Activated CD4-positive, alpha-beta memory T cell treated with anti-CD3 and anti-CD28 coated beads for 36 hours (primary cell): ENCODE measurements at regions of chr6 and their contacts with region 1.

Region 1: DNA sequence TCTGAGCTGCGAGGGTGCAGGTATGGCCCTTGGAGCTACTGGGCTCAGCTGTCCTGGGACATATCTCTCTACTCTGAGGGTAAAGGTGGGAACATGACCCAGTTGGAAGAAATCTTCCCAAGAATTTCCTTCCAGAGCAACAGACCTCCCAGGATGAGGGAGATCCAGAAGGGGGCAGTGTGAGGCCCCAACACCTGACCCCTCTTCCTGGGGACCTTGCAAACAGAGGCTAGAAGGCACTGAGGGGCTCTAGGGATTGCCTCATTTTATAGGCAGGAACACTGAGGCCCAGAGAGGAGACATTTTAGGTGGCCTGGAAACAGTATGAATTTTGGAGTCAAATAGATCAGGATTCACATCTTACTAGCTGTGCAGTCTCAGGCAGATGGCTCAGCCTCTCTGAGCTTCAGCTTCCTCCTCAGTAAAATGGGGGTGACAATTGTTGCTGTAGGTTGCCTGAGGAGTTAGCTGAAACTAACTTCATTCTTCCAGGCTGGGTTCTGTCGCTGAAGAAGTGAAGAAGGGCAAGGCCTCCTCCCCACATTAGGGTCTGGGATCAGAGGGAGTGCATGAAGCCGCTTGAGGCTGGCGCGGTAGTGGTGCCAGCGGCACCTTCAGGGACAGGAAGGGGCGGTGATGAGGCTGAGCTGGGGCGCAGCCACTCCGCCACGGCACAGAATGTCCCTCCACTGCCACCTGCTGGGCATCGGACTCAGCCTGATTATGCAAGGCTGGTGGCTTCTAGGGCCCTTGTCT is 11.4 kb downstream of the KCNK17 start:
- DNase-seq: peak; percentile 92
- H3K4me3 Mint-ChIP-seq: peak overlapping the region; percentile 59
- H3K27ac Mint-ChIP-seq: no peak overlapping the region
- H3K4me1 Mint-ChIP-seq: peaks cover 3% of the 10 kb centered on the region
- H3K27me3 Mint-ChIP-seq: no peaks in the 10 kb centered on the region

Region 2: DNA sequence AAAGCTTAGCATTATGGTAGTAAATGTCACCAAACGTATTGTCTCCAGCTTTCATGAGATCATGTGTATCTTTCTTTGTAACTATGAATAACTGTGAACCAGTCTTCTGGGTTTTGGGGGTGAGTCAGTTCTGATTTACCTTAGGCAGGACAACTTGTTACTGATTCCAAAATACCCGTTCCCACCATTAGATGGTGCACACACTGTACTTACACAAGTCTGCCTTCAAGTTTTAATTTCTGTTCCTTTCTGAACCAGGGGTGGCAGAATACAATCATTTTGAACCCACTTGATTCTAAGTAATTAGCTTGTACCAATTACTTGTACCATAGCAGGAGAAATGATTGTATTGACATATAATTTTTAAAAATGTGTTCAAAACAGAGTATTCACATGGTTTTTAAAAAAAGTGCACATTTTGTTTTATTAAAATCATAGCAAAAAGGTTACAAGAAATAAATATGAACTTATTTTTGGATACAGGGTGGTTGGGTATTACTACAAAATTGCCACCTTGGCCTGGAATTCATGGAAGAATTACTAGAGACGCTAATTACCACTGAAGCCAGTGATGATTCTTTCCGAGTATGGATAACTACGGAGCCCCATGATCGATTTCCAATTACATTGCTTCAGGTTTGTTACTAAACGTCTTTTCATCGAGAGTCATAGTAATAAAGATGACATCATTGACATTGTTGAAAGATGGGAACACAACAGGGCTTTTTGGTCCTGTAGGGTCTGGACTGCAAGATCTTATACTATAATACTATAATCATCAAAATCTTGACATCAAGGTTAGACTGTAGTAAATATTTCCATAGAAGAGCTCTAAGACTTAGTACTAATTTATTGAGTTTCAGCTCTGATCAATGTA is 329.4 kb before region 1 on chr6:
- CTCF ChIA-PET with region 1: interaction called, 31 read pairs
- POLR2A ChIA-PET with region 1: no interaction called
- intact Hi-C with region 1: loop called (anchors 1 kb)
- DNase-seq: peak; percentile 13
- H3K4me3 Mint-ChIP-seq: no peak overlapping the region
- H3K27ac Mint-ChIP-seq: no peak overlapping the region
- H3K4me1 Mint-ChIP-seq: peaks cover 2% of the 10 kb centered on the region
- H3K27me3 Mint-ChIP-seq: peaks cover 13% of the 10 kb centered on the region

Region 3: GRCh38 chr6:38997128-38997761 is 305.6 kb before region 1 on chr6:
- CTCF ChIA-PET with region 1: interaction called, 39 read pairs
- POLR2A ChIA-PET with region 1: no interaction called
- intact Hi-C with region 1: loop called (anchors 5 kb)
- DNase-seq: peak; percentile 47
- H3K4me3 Mint-ChIP-seq: no peak overlapping the region
- H3K27ac Mint-ChIP-seq: no peak overlapping the region
- H3K4me1 Mint-ChIP-seq: no peaks in the 10 kb centered on the region
- H3K27me3 Mint-ChIP-seq: peaks cover 29% of the 10 kb centered on the region

Region 4: GRCh38 chr6:39153766-39154397 is 149.0 kb before region 1 on chr6:
- CTCF ChIA-PET with region 1: interaction called, 14 read pairs
- POLR2A ChIA-PET with region 1: no interaction called
- intact Hi-C with region 1: no loop called
- DNase-seq: peak; percentile 60
- H3K4me3 Mint-ChIP-seq: no peak overlapping the region
- H3K27ac Mint-ChIP-seq: peak overlapping the region; percentile 75
- H3K4me1 Mint-ChIP-seq: peaks cover 25% of the 10 kb centered on the region
- H3K27me3 Mint-ChIP-seq: peaks cover 23% of the 10 kb centered on the region

Region 5: GRCh38 chr6:39166189-39166911 is 136.5 kb before region 1 on chr6:
- CTCF ChIA-PET with region 1: interaction called, 469 read pairs
- POLR2A ChIA-PET with region 1: no interaction called
- intact Hi-C with region 1: loop called (anchors 1 kb)
- DNase-seq: peak; percentile 90
- H3K4me3 Mint-ChIP-seq: no peak overlapping the region
- H3K27ac Mint-ChIP-seq: no peak overlapping the region
- H3K4me1 Mint-ChIP-seq: peaks cover 4% of the 10 kb centered on the region
- H3K27me3 Mint-ChIP-seq: no peaks in the 10 kb centered on the region

Region 6: GRCh38 chr6:39182604-39183003 is 120.2 kb before region 1 on chr6:
- CTCF ChIA-PET with region 1: interaction called, 13 read pairs
- POLR2A ChIA-PET with region 1: no interaction called
- intact Hi-C with region 1: no loop called
- DNase-seq: no peak
- H3K4me3 Mint-ChIP-seq: no peak overlapping the region
- H3K27ac Mint-ChIP-seq: no peak overlapping the region
- H3K4me1 Mint-ChIP-seq: no peaks in the 10 kb centered on the region
- H3K27me3 Mint-ChIP-seq: no peaks in the 10 kb centered on the region

Region 7: GRCh38 chr6:39189915-39190544 is 112.8 kb before region 1 on chr6:
- CTCF ChIA-PET with region 1: interaction called, 31 read pairs
- POLR2A ChIA-PET with region 1: no interaction called
- intact Hi-C with region 1: no loop called
- DNase-seq: peak; percentile 37
- H3K4me3 Mint-ChIP-seq: no peak overlapping the region
- H3K27ac Mint-ChIP-seq: no peak overlapping the region
- H3K4me1 Mint-ChIP-seq: peaks cover 4% of the 10 kb centered on the region
- H3K27me3 Mint-ChIP-seq: no peaks in the 10 kb centered on the region